ENCODE measurements at regions of chr18 and their contacts with region 1.

Region 1: DNA sequence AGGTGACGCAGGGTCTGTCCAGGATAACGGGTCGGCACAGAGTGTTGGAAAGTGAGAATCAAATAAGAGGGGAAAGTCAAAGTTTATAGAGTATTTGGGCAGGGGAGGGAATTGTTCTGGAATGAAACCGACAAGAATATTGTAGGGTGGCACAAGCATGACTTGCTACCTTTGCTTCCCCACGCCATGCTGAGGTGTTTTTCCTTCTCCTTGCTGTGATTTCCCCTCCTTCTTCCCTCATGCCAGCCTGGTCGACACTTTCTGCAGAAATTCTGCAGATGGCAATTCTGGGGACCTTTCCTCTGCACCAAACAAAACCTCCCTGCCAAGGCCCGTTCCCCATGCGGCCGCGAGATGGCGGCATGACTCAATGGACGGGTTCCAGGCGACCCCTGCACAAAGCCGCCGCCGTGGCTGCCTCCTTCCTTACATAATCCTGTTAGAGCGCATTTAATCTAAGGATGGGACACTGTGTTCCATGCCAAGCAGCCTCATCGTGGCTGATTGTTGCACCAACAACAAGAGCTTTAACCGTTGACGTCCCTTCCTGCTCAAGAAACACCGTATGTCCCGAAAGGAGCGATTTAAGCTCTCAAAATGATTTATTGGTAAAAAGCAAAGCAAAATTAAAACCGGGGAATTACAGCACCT is at the start of gene MRO:
- DNase-seq: peak; percentile 56
- ATAC-seq: peak; percentile 90
- H3K4me3 ChIP-seq: peak within 1 kb of the TSS; percentile 64
- H3K27ac ChIP-seq: no peak within 1 kb of the TSS
- H3K4me1 ChIP-seq: no peaks in the 10 kb centered on the region
- H3K27me3 ChIP-seq: no peaks in the 10 kb centered on the region
- CTCF ChIP-seq: peak; percentile 71
- total RNA-seq, gene MRO: 0.55 TPM in 1 of 2 replicates, not detected in the other

Region 2: GRCh38 chr18:50866765-50867164 is 46.9 kb after region 1 on chr18:
- CTCF ChIA-PET with region 1: interaction called, 5 read pairs
- POLR2A ChIA-PET with region 1: no interaction called
- intact Hi-C with region 1: loop called (anchors 1 kb)
- DNase-seq: peak; percentile 14
- ATAC-seq: peak; percentile 26; the same call in 1 of the 2 replicates
- H3K4me3 ChIP-seq: no peak overlapping the region
- H3K27ac ChIP-seq: no peak overlapping the region
- H3K4me1 ChIP-seq: peaks cover 17% of the 10 kb centered on the region
- H3K27me3 ChIP-seq: no peaks in the 10 kb centered on the region
- CTCF ChIP-seq: peak; percentile 38; the same call in 1 of the 2 replicates

Region 3: GRCh38 chr18:51029694-51030536 is 210.1 kb after region 1 on chr18 and contains the start of gene SMAD4:
- CTCF ChIA-PET with region 1: no interaction called
- POLR2A ChIA-PET with region 1: no interaction called
- intact Hi-C with region 1: loop called (anchors 10 kb)
- DNase-seq: peak; percentile 78
- ATAC-seq: peak; percentile 77
- H3K4me3 ChIP-seq: peak within 1 kb of the TSS; percentile 80
- H3K27ac ChIP-seq: 0 out of 2 replicates have a peak within 1 kb of the TSS, but pooled peaks have one; percentile 13
- H3K4me1 ChIP-seq: peaks cover 13% of the 10 kb centered on the region; the same call in 1 of the 2 replicates
- H3K27me3 ChIP-seq: no peaks in the 10 kb centered on the region
- CTCF ChIP-seq: no peak
- total RNA-seq, gene SMAD4: 19.7 and 42.8 TPM in 2 replicates

Region 4: DNA sequence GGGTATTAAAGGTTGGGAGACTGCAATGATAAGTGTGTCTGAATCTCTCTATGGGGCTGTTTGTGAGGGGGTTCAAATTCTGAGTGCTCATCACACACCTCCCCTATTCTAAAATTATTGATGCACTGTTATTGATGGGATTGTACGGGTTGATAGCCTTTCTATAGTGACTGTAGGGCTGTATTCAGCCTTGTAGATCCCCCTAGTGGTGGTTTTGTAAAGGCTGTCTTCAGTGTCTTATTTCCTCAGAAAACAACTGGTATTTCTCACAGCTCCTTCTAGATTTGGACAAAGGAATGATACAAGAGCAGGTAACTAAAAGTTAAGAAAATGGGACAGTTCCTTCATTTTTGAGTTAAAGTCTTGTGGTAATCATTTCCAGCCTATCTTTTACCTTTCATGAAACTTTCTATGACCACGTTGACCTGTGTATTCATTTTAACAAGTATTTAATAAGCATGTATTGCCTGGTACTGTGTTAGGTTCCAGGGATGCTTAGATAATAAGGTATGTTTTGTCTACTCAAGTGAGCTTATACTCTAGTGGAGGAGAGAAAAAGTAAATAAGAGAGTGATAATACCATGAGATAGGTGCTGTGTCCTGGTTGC is 231.4 kb after region 1 on chr18:
- CTCF ChIA-PET with region 1: no interaction called
- POLR2A ChIA-PET with region 1: no interaction called
- intact Hi-C with region 1: loop called (anchors 1 kb)
- DNase-seq: peak; percentile 46
- ATAC-seq: peak; percentile 75
- H3K4me3 ChIP-seq: no peak overlapping the region
- H3K27ac ChIP-seq: no peak overlapping the region
- H3K4me1 ChIP-seq: no peaks in the 10 kb centered on the region
- H3K27me3 ChIP-seq: no peaks in the 10 kb centered on the region
- CTCF ChIP-seq: peak; percentile 67

Region 5: GRCh38 chr18:51197661-51198424 is 378.0 kb after region 1 on chr18 and contains the start of gene MEX3C:
- CTCF ChIA-PET with region 1: no interaction called
- POLR2A ChIA-PET with region 1: no interaction called
- intact Hi-C with region 1: loop called (anchors 10 kb)
- DNase-seq: peak; percentile 92
- ATAC-seq: peak; percentile 80
- H3K4me3 ChIP-seq: peak within 1 kb of the TSS; percentile 84
- H3K27ac ChIP-seq: peak within 1 kb of the TSS; percentile 83
- H3K4me1 ChIP-seq: peaks cover 6% of the 10 kb centered on the region; the same call in 1 of the 2 replicates
- H3K27me3 ChIP-seq: no peaks in the 10 kb centered on the region
- CTCF ChIP-seq: no peak
- total RNA-seq, gene MEX3C: 13.2 and 15.8 TPM in 2 replicates